ENCODE measurements at regions of chr7 and their contacts with region 1.

Region 1: GRCh38 chr7:106840342-106840741 is 24.7 kb upstream of the PIK3CG start:
- DNase-seq: no peak
- H3K4me3 Mint-ChIP-seq: no peak overlapping the region
- H3K27ac Mint-ChIP-seq: no peak overlapping the region
- H3K4me1 Mint-ChIP-seq: no peaks in the 10 kb centered on the region
- H3K27me3 Mint-ChIP-seq: peaks cover 5% of the 10 kb centered on the region

Region 2: GRCh38 chr7:106572394-106573124 is 267.8 kb before region 1 on chr7:
- intact Hi-C with region 1: no loop called
- DNase-seq: no peak
- H3K4me3 Mint-ChIP-seq: no peak overlapping the region
- H3K27ac Mint-ChIP-seq: no peak overlapping the region
- H3K4me1 Mint-ChIP-seq: peaks cover 6% of the 10 kb centered on the region
- H3K27me3 Mint-ChIP-seq: peaks cover 2% of the 10 kb centered on the region

Region 3: DNA sequence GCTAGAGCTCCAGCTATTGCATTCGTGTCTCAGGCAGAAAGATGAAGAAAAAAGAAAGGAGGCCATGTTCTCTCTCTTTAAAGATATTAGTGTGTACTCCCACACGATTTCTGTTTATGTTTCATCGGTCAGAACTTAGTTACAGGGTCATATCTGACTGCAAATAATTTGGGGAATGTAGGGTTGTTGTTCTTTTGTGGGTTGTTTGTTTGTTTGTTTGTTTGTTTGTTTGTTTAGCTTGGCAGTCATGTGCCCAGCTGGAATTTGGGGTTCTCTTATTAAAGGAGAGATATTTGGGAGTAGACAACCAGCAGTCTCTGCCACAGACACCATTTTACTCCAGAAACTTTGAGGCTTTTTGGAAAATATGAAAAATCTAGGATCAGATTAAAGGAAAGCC is 28.8 kb before region 1 on chr7:
- intact Hi-C with region 1: loop called (anchors 1 kb)
- DNase-seq: no peak
- H3K4me3 Mint-ChIP-seq: no peak overlapping the region
- H3K27ac Mint-ChIP-seq: no peak overlapping the region
- H3K4me1 Mint-ChIP-seq: peaks cover 16% of the 10 kb centered on the region
- H3K27me3 Mint-ChIP-seq: peaks cover 4% of the 10 kb centered on the region

Region 4: DNA sequence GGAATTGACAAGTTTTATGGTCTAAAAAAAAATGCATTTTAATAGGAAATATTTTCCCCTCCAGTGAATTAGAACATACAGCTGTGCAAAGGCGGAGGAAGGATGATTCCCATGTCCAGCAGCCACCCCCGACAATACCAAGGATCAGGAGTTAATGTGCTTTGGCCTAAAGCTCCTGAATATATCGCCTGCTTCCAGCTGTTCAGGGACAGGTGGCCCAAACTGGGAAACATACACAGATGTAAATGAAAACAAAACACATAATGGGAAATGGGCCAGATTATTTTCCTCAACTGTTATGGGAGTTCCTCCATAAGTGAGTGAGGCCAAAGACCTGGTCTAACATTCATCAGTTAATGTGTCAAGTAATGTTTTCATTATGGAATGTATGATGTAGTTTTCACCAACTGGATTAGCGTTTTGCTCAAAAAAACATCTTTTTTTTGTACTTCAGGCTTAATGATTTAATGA is 1217.6 kb after region 1 on chr7:
- intact Hi-C with region 1: loop called (anchors 5 kb)
- DNase-seq: no peak
- H3K4me3 Mint-ChIP-seq: no peak overlapping the region
- H3K27ac Mint-ChIP-seq: no peak overlapping the region
- H3K4me1 Mint-ChIP-seq: no peaks in the 10 kb centered on the region
- H3K27me3 Mint-ChIP-seq: peaks cover 3% of the 10 kb centered on the region

Measured in activated T-helper 1 cell treated with anti-CD3 and anti-CD28 coated beads, Interleukin-12 subunit alpha, Interleukin-12 subunit beta, Interleukin-2, Interleukin-4 antibody, amounts not matched to agents 30 ng/mL and 10 ng/mL and 1 ng/mL, durations not matched to agents 14 hours and 24 hours and 36 hours (primary cell).